ENCODE measurements at regions of chr6 and their contacts with region 1.

Region 1: DNA sequence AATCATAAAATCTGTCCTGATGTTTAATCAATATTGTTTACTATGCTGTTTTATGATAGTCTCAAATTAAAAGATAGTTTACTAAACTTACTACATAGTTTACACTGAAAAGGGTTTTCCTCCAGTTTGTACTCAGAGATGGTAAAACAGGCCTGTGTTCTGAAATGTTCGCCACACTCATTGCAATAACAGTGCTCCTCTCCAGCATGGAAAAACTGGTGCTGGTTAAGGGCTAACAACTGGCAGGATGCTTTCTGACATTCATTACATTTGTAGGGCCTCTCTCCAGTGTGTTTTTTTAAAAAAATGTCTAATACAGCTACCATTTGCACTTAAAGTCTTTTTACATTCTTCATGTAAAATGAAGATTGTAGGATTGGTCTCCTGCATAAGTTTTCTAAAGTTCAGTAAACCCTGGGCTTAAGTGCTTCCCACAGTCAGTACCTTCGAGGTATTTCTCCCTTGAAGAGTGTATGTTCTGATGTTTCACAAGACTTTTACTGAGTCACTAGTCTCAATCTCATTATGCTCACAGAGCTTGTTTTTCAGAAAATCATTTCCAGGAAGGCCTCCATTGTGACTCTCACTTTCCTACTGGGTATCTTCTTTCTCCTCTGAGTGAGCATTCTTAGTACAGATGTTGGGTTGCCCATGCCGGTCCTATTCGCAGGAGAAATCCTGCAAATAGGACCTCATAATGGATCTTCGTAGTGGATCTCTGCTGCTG is 8.7 kb upstream of the ZSCAN12 start:
- H3K4me3 ChIP-seq: no peak overlapping the region
- H3K27ac ChIP-seq: no peak overlapping the region
- H3K4me1 ChIP-seq: no peaks in the 10 kb centered on the region
- CTCF ChIP-seq: no peak

Region 2: GRCh38 chr6:27940766-27941165 is 467.5 kb before region 1 on chr6:
- CTCF ChIA-PET with region 1: no interaction called
- POLR2A ChIA-PET with region 1: interaction called, 10 read pairs
- H3K4me3 ChIP-seq: no peak overlapping the region
- H3K27ac ChIP-seq: no peak overlapping the region
- H3K4me1 ChIP-seq: no peaks in the 10 kb centered on the region
- CTCF ChIP-seq: no peak

Region 3: DNA sequence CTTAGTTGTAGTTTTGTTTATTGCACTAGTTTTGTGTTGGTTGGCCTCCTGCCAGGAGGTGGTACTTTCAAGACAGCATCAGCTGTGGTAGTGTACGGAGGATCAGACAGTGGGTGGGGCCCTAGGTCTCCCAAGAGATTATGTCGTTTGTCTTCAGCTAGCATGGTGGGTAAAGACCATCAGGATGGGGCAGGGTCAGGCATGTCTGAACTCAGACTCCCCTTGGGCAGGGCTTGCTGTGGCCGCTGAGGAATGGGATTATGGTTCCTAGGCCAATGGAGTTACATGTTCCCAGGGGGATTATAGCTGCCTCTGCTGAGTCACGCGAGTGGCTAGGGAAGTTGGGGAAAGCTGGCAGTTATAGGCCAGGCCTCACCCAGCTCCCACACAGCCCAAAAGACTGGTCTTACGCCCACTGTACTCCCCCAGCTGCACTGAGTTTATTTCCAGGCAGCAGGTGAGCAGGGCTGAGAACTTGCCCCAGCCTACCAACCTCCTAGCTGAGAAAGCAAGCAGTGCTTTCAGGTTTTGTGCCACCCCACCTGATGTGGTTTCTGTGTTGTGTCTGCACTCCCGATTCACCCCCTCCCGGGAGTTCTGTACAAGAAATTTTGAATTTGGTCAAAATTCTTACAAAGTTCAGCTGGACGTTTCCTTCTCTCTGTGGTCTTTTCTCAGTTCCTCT is 97.0 kb before region 1 on chr6:
- CTCF ChIA-PET with region 1: no interaction called
- POLR2A ChIA-PET with region 1: no interaction called
- H3K4me3 ChIP-seq: no peak overlapping the region
- H3K27ac ChIP-seq: peak overlapping the region; percentile 62
- H3K4me1 ChIP-seq: peaks cover 6% of the 10 kb centered on the region
- CTCF ChIP-seq: no peak

Region 4: GRCh38 chr6:28368522-28368921 is 39.7 kb before region 1 on chr6:
- CTCF ChIA-PET with region 1: no interaction called
- POLR2A ChIA-PET with region 1: no interaction called
- H3K4me3 ChIP-seq: no peak overlapping the region
- H3K27ac ChIP-seq: no peak overlapping the region
- H3K4me1 ChIP-seq: no peaks in the 10 kb centered on the region
- CTCF ChIP-seq: no peak